Left ventricle myocardium superior (tissue), 1 donor: ENCODE measurements at regions of chr3 and their contacts with region 1.

Region 1: GRCh38 chr3:141279077-141279967 is 47.7 kb downstream of the PXYLP1 start:
- DNase-seq: no peak
- ATAC-seq: peak; percentile 61

Region 2: GRCh38 chr3:140931016-140931454 is 348.3 kb before region 1 on chr3:
- intact Hi-C with region 1: no loop called
- DNase-seq: no peak
- ATAC-seq: no peak

Region 3: GRCh38 chr3:141231101-141231935 is 48.0 kb before region 1 on chr3 and contains the start of gene PXYLP1:
- intact Hi-C with region 1: loop called (anchors 5 kb)
- DNase-seq: peak; percentile 98
- ATAC-seq: peak; percentile 93
- total RNA-seq, gene PXYLP1: 12.3 TPM